ENCODE measurements at regions of chr20 and their contacts with region 1.

Region 1: GRCh38 chr20:39049684-39050554 is 87.8 kb downstream of the DHX35 start:
- DNase-seq: peak; percentile 75
- H3K4me3 ChIP-seq: peak overlapping the region in 2 of 3 experiments; percentile 36 to 63
- H3K27ac ChIP-seq: no peak overlapping the region
- H3K4me1 ChIP-seq: peaks cover 3% of the 10 kb centered on the region
- H3K27me3 ChIP-seq: no peaks in the 10 kb centered on the region
- CTCF ChIP-seq: peak; percentile 97 to 98
- POLR2A ChIP-seq: peak; percentile 64

Region 2: GRCh38 chr20:38633577-38634093 is 416.3 kb before region 1 on chr20:
- CTCF ChIA-PET with region 1: no interaction called
- POLR2A ChIA-PET with region 1: no interaction called
- dilution Hi-C with region 1: no loop called
- intact Hi-C with region 1: loop called (anchors 1 kb)
- DNase-seq: peak; percentile 47
- H3K4me3 ChIP-seq: no peak overlapping the region
- H3K27ac ChIP-seq: no peak overlapping the region
- H3K4me1 ChIP-seq: no peaks in the 10 kb centered on the region
- H3K27me3 ChIP-seq: peaks cover 0 to 2% of the 10 kb centered on the region in 2 experiments
- CTCF ChIP-seq: peak; percentile 89 to 94
- POLR2A ChIP-seq: no peak

Region 3: DNA sequence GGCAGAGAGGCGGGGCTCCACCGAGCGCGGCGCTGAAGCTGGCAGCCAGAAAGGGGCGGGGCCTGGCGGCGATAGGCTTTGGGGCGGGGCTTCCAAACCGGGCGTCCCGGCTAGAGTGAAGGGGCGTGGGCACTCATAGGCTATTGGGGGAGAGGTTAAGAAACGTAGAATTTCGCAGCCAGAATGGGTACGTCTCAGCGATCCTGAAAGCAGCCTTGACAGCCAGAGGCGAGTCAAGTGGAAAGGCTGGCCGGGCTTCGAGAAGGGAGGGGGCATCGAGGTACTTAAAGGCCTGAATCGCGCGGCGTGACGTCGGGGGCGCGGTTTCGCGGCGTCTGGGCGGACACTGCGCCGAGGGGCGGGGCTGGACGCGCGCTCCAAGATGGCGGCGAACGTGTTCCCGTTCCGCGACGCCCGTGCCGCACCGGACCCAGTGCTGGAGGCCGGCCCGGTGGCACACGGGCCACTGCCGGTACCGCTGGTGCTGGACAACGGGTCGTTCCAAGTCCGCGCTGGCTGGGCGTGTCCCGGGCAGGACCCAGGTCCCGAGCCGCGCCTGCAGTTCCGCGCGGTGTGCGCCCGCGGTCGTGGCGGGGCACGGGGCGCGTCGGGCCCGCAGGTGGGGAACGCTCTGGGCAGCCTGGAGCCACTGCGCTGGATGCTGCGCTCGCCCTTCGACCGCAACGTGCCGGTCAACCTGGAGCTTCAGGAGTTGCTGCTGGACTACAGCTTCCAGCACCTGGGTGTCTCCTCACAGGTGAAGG is 301.6 kb before region 1 on chr20 and contains the start of gene ACTR5:
- CTCF ChIA-PET with region 1: no interaction called
- POLR2A ChIA-PET with region 1: no interaction called
- dilution Hi-C with region 1: no loop called
- intact Hi-C with region 1: loop called (anchors 5 kb)
- DNase-seq: peak; percentile 94
- H3K4me3 ChIP-seq: peak within 1 kb of the TSS; percentile 26 to 86 (median 77)
- H3K27ac ChIP-seq: peak within 1 kb of the TSS; percentile 46
- H3K4me1 ChIP-seq: peaks cover 6% of the 10 kb centered on the region
- H3K27me3 ChIP-seq: no peaks in the 10 kb centered on the region
- CTCF ChIP-seq: no peak
- POLR2A ChIP-seq: peak; percentile 80
- total RNA-seq, gene ACTR5: 9.7 and 11.3 TPM in 2 replicates

Region 4: DNA sequence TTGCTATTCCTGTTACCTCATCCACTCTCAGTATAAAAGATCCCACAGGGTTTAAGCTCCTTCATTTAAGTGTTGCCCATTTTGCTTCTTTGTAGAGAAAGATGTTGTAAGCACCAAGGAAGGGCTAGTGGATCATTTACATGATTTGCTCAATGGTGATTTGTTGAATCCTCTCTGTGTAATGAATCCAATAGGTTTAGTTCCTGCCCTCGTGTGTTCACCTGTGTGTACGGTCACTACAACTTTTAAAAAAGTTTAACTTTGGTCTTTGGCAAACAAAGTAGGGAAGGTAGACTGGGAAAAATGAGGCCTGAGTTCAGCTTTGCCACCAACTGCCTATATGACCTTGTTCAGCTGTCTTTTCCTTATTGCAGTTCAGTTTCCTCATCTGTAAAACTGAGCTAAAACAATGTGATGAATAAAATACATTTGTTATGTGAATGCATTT is 36.2 kb before region 1 on chr20:
- CTCF ChIA-PET with region 1: interaction called, 13 read pairs
- POLR2A ChIA-PET with region 1: no interaction called
- dilution Hi-C with region 1: no loop called
- intact Hi-C with region 1: no loop called
- DNase-seq: no peak
- H3K4me3 ChIP-seq: no peak overlapping the region
- H3K27ac ChIP-seq: no peak overlapping the region
- H3K4me1 ChIP-seq: peaks cover 18% of the 10 kb centered on the region
- H3K27me3 ChIP-seq: no peaks in the 10 kb centered on the region
- CTCF ChIP-seq: no peak
- POLR2A ChIP-seq: no peak

Region 5: DNA sequence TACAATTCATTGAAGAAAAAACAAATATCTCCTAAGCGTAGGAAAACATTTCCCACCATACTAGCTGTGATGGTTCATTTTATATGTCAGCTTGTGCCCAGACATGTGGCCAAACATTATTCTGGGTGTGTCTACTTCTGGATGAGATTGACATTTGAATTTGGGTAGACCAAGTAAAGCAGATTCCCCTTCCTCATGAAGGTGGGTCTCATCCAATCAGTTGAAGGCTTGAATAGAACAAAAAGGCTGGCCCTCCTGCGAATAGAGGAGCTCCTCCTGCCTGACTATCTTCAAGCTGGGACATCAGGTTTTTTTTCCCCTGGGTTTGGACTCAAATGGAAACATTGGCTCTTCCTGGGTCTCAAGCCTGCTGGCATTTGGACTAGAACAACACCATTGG is 25.8 kb after region 1 on chr20:
- CTCF ChIA-PET with region 1: interaction called, 143 read pairs
- POLR2A ChIA-PET with region 1: no interaction called
- dilution Hi-C with region 1: no loop called
- intact Hi-C with region 1: no loop called
- DNase-seq: no peak
- H3K4me3 ChIP-seq: no peak overlapping the region
- H3K27ac ChIP-seq: no peak overlapping the region
- H3K4me1 ChIP-seq: no peaks in the 10 kb centered on the region
- H3K27me3 ChIP-seq: peaks cover 8 to 9% of the 10 kb centered on the region in 2 experiments
- CTCF ChIP-seq: no peak
- POLR2A ChIP-seq: no peak

Region 6: GRCh38 chr20:39112178-39112743 is 62.3 kb after region 1 on chr20:
- CTCF ChIA-PET with region 1: interaction called, 11 read pairs
- POLR2A ChIA-PET with region 1: no interaction called
- dilution Hi-C with region 1: no loop called
- intact Hi-C with region 1: loop called (anchors 2 kb)
- DNase-seq: peak; percentile 41
- H3K4me3 ChIP-seq: no peak overlapping the region
- H3K27ac ChIP-seq: no peak overlapping the region
- H3K4me1 ChIP-seq: peaks cover 22% of the 10 kb centered on the region
- H3K27me3 ChIP-seq: peaks cover 2 to 20% of the 10 kb centered on the region in 2 experiments
- CTCF ChIP-seq: peak; percentile 49 to 62
- POLR2A ChIP-seq: no peak

Region 7: GRCh38 chr20:40689943-40690835 is 1640.3 kb after region 1 on chr20:
- CTCF ChIA-PET with region 1: interaction called, 12 read pairs
- POLR2A ChIA-PET with region 1: no interaction called
- dilution Hi-C with region 1: no loop called
- intact Hi-C with region 1: no loop called
- DNase-seq: peak; percentile 81
- H3K4me3 ChIP-seq: peak overlapping the region; percentile 16 to 38 (median 24)
- H3K27ac ChIP-seq: peak overlapping the region; percentile 9
- H3K4me1 ChIP-seq: peaks cover 9% of the 10 kb centered on the region
- H3K27me3 ChIP-seq: peaks cover 45 to 65% of the 10 kb centered on the region in 2 experiments
- CTCF ChIP-seq: peak; percentile 95
- POLR2A ChIP-seq: no peak